ENCODE measurements at regions of chrX and their contacts with region 1.

Region 1: GRCh38 chrX:2690856-2691542 is at the start of gene CD99:
- DNase-seq: peak; percentile 81 to 93 (median 85)
- ATAC-seq: peak; percentile 96
- H3K4me3 ChIP-seq: peak within 1 kb of the TSS; percentile 91
- H3K4me3 Mint-ChIP-seq: peak within 1 kb of the TSS; percentile 87 to 98 (median 95)
- H3K27ac ChIP-seq: peak within 1 kb of the TSS; percentile 83
- H3K27ac Mint-ChIP-seq: peak within 1 kb of the TSS; percentile 80 to 95 (median 91)
- H3K4me1 ChIP-seq: peaks cover 31 to 33% of the 10 kb centered on the region in 2 donors
- H3K4me1 Mint-ChIP-seq: peaks cover 36 to 42% (median 39%) of the 10 kb centered on the region in 7 donors
- H3K27me3 ChIP-seq: no peaks in the 10 kb centered on the region
- H3K27me3 Mint-ChIP-seq: peaks cover 0 to 11% (median 0%) of the 10 kb centered on the region in 5 donors
- total RNA-seq, gene CD99: 112 to 293 (median 181) TPM

Region 2: DNA sequence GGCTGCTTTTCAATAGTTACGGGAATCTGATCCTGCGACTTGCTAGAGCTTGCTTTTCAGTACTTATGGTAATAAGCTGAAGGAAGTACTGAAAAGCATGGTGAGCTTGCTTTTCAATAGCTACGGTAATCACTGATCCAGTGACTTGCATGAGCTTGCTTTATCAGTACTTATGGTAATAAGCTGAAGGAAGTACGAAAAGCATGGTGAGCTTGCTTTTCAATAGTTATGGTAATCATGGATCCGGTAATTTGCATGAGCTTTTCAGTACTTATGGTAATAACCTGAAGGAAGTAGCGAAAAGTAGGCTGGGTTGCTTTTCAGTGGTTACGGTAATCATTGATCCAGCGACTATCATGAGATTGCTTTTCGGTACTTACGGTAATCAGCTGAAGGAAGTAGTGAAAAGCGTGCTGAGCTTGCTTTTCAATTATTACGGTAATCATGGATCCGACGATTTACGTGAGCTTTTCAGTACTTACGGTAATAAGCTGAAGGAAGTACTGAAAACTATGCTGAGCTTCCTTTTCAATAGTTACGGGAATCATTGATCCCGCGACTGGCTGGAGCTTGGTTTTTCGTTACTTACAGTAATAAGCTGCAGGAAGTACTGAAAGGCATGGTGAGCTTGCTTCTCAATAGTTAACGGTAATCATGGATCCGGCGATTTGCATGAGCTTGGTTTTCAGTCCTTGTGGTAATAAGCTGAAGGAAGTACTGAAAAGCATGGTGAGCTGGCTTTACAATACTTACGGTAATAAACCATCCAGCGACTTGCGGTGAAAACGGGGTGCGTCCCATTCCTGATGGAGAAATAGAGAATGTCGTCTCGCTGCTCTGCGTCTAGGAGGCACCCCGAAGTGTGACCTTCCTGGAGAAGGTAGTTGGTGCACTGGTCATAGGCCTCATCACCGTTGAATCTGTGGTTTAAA is 1485.1 kb before region 1 on chrX:
- CTCF ChIA-PET with region 1: no interaction called
- POLR2A ChIA-PET with region 1: no interaction called
- intact Hi-C with region 1: loop called in 1 of 2 experiments (anchors 1 kb)
- DNase-seq: peak; percentile 14 to 77 (median 69)
- ATAC-seq: peak; percentile 70
- H3K4me3 ChIP-seq: peak overlapping the region; percentile 56
- H3K4me3 Mint-ChIP-seq: peak overlapping the region; percentile 76 to 87 (median 83)
- H3K27ac ChIP-seq: no peak overlapping the region
- H3K27ac Mint-ChIP-seq: peak overlapping the region in 7 of 9 donors; percentile 22 to 68 (median 36)
- H3K4me1 ChIP-seq: peaks cover 6 to 11% of the 10 kb centered on the region in 2 donors
- H3K4me1 Mint-ChIP-seq: peaks cover 15 to 42% (median 32%) of the 10 kb centered on the region in 7 donors
- H3K27me3 ChIP-seq: no peaks in the 10 kb centered on the region
- H3K27me3 Mint-ChIP-seq: no peaks in the 10 kb centered on the region

Region 3: GRCh38 chrX:2561456-2561855 is 129.5 kb before region 1 on chrX:
- CTCF ChIA-PET with region 1: no interaction called
- POLR2A ChIA-PET with region 1: no interaction called
- intact Hi-C with region 1: no loop called
- DNase-seq: no peak
- ATAC-seq: no peak
- H3K4me3 ChIP-seq: no peak overlapping the region
- H3K4me3 Mint-ChIP-seq: no peak overlapping the region
- H3K27ac ChIP-seq: no peak overlapping the region
- H3K27ac Mint-ChIP-seq: no peak overlapping the region
- H3K4me1 ChIP-seq: no peaks in the 10 kb centered on the region
- H3K4me1 Mint-ChIP-seq: no peaks in the 10 kb centered on the region
- H3K27me3 ChIP-seq: no peaks in the 10 kb centered on the region
- H3K27me3 Mint-ChIP-seq: peaks cover 0 to 29% (median 19%) of the 10 kb centered on the region in 5 donors

Region 4: GRCh38 chrX:2608638-2609430 is 82.2 kb before region 1 on chrX:
- CTCF ChIA-PET with region 1: no interaction called
- POLR2A ChIA-PET with region 1: no interaction called
- intact Hi-C with region 1: loop called (anchors 1 kb)
- DNase-seq: peak; percentile 69 to 89 (median 79)
- ATAC-seq: peak; percentile 99
- H3K4me3 ChIP-seq: peak overlapping the region; percentile 89
- H3K4me3 Mint-ChIP-seq: peak overlapping the region; percentile 90 to 96 (median 93)
- H3K27ac ChIP-seq: peak overlapping the region; percentile 71
- H3K27ac Mint-ChIP-seq: peak overlapping the region; percentile 51 to 93 (median 86)
- H3K4me1 ChIP-seq: peaks cover 9 to 17% of the 10 kb centered on the region in 2 donors
- H3K4me1 Mint-ChIP-seq: peaks cover 39 to 72% (median 56%) of the 10 kb centered on the region in 7 donors
- H3K27me3 ChIP-seq: no peaks in the 10 kb centered on the region
- H3K27me3 Mint-ChIP-seq: no peaks in the 10 kb centered on the region

Region 5: DNA sequence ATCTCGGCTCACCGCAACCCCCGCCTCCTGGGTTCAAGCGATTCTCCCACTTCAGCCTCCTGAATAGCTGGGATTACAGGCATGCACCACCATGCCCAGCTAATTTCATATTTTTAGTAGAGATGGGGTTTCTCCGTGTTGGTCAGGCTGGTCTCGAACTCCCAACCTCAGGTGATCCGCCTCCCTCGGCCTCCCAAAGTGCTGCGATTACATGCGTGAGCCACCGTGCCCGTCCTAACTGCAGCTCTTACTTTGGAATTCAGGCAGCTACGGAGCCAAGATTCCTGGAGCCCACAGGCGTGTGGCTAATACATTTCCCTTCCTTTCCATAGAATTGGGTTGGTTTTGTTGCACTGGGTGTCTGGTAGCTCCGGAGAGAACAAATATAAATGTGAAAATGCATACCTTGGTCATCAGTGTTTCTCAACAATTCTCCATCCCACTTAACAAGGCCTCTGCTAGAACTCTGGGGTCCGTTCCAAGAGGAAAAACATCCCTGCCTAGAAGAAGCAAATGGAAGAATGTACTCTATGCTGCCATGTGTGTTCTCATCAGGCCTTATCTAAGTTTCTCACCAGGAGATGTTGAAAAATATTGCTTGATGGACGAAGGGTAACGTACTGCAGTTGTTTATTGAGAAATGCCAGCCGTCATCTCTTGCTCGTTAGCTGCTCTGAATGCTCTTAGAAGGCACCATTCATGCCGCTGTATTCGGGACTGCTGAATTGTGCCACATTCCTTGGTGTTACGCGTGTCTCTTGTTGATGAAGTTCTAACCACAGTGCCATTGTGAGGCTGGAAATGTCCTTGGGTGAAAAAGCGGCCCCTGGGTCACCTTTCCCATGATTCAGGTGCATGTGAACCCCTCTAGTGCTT is 50.5 kb before region 1 on chrX:
- CTCF ChIA-PET with region 1: no interaction called
- POLR2A ChIA-PET with region 1: no interaction called
- intact Hi-C with region 1: loop called (anchors 2 to 5 kb)
- DNase-seq: no peak
- ATAC-seq: no peak
- H3K4me3 ChIP-seq: no peak overlapping the region
- H3K4me3 Mint-ChIP-seq: no peak overlapping the region
- H3K27ac ChIP-seq: no peak overlapping the region
- H3K27ac Mint-ChIP-seq: no peak overlapping the region
- H3K4me1 ChIP-seq: no peaks in the 10 kb centered on the region
- H3K4me1 Mint-ChIP-seq: peaks cover 0 to 4% (median 0%) of the 10 kb centered on the region in 7 donors
- H3K27me3 ChIP-seq: no peaks in the 10 kb centered on the region
- H3K27me3 Mint-ChIP-seq: no peaks in the 10 kb centered on the region

Region 6: GRCh38 chrX:3713225-3713936 is 1022.4 kb after region 1 on chrX and contains the start of gene PRKX:
- CTCF ChIA-PET with region 1: no interaction called
- POLR2A ChIA-PET with region 1: no interaction called
- intact Hi-C with region 1: loop called in 1 of 2 experiments (anchors 10 kb)
- DNase-seq: peak; percentile 59 to 85 (median 78)
- ATAC-seq: peak; percentile 94
- H3K4me3 ChIP-seq: peak within 1 kb of the TSS; percentile 67
- H3K4me3 Mint-ChIP-seq: peak within 1 kb of the TSS; percentile 91 to 99 (median 96)
- H3K27ac ChIP-seq: peak within 1 kb of the TSS; percentile 71
- H3K27ac Mint-ChIP-seq: peak within 1 kb of the TSS; percentile 64 to 97 (median 90)
- H3K4me1 ChIP-seq: peaks cover 7 to 15% of the 10 kb centered on the region in 2 donors
- H3K4me1 Mint-ChIP-seq: peaks cover 0 to 44% (median 17%) of the 10 kb centered on the region in 7 donors
- H3K27me3 ChIP-seq: no peaks in the 10 kb centered on the region
- H3K27me3 Mint-ChIP-seq: no peaks in the 10 kb centered on the region
- total RNA-seq, gene PRKX: 43.9 to 118 (median 55.2) TPM